ENCODE measurements at regions of chr6 and their contacts with region 1.

Region 1: GRCh38 chr6:149925974-149926777 is 3.3 kb upstream of the RAET1G start:
- DNase-seq: peak; percentile 87 to 93 (median 90)
- ATAC-seq: peak; percentile 84 to 93 (median 92)
- H3K4me3 ChIP-seq: peak overlapping the region; percentile 42 to 63 (median 56)
- H3K27ac ChIP-seq: peak overlapping the region in 10 of 12 donors; percentile 30 to 70 (median 58)
- H3K4me1 ChIP-seq: peaks cover 0 to 32% (median 20%) of the 10 kb centered on the region in 12 donors
- H3K27me3 ChIP-seq: peaks cover 0 to 58% (median 24%) of the 10 kb centered on the region in 9 donors
- CTCF ChIP-seq: peak; percentile 72 to 95 (median 86)
- POLR2A ChIP-seq: no peak

Region 2: DNA sequence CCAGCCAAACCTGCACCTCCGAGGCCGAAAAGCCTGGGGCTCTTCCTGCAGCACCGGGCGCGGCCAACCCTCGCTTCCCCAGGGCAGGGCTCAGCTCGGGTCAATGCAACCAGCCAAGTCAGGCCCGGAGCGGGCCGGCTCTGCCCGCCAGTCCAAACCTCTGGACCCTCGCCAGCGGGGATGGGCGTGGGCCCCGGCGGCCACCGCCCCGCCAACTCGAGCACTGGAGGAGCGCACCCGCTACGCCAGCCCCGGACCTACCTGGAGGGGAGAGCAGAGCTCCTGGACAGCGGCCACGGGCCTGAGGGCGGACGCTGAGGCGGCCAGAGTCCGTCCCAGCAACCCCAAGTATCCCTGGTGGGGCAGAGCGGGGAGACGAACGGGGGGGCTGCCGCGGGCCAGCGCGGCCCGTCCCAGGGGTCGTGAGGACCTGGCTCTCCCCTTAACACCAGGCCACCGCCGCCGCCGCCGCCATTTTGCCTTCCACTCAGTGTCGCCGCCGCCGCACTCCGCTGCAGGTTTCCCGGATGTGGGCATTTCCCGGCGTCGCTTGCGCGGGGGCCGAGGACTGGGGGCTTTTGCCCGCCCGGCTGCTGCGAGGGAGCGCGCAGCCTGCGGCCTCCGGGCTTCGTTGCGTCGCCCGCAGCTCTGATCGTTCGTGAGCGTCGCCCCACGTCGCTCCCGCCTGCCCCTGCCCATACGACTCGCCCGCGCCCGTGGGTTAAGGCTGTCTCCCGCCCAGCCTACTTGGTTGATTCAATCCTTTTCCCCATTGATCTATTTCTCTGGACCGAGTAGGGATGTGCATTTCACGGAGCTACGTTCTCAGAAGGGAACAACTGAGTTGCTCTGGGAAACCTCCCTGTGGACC is 208.4 kb before region 1 on chr6 and contains the start of gene LATS1:
- intact Hi-C with region 1: loop called in 6 of 10 experiments (anchors 2 to 10 kb)
- DNase-seq: peak; percentile 91 to 95 (median 95)
- ATAC-seq: peak; percentile 92 to 96 (median 94)
- H3K4me3 ChIP-seq: peak within 1 kb of the TSS; percentile 59 to 98 (median 81)
- H3K27ac ChIP-seq: peak within 1 kb of the TSS; percentile 94 to 100 (median 98)
- H3K4me1 ChIP-seq: peaks cover 3 to 39% (median 26%) of the 10 kb centered on the region in 12 donors
- H3K27me3 ChIP-seq: no peaks in the 10 kb centered on the region
- CTCF ChIP-seq: no peak
- POLR2A ChIP-seq: peak in 1 of 2 donors; percentile 73
- total RNA-seq, gene LATS1: 9.4 to 18.5 (median 10.9) TPM

Region 3: GRCh38 chr6:149729824-149730223 is 196.4 kb before region 1 on chr6:
- intact Hi-C with region 1: loop called in 5 of 10 experiments (anchors 5 to 10 kb)
- DNase-seq: no peak
- ATAC-seq: no peak
- H3K4me3 ChIP-seq: no peak overlapping the region
- H3K27ac ChIP-seq: peak overlapping the region in 1 of 12 donors; percentile 90
- H3K4me1 ChIP-seq: peaks cover 0 to 32% (median 0%) of the 10 kb centered on the region in 12 donors
- H3K27me3 ChIP-seq: no peaks in the 10 kb centered on the region
- CTCF ChIP-seq: no peak
- POLR2A ChIP-seq: no peak

Region 4: DNA sequence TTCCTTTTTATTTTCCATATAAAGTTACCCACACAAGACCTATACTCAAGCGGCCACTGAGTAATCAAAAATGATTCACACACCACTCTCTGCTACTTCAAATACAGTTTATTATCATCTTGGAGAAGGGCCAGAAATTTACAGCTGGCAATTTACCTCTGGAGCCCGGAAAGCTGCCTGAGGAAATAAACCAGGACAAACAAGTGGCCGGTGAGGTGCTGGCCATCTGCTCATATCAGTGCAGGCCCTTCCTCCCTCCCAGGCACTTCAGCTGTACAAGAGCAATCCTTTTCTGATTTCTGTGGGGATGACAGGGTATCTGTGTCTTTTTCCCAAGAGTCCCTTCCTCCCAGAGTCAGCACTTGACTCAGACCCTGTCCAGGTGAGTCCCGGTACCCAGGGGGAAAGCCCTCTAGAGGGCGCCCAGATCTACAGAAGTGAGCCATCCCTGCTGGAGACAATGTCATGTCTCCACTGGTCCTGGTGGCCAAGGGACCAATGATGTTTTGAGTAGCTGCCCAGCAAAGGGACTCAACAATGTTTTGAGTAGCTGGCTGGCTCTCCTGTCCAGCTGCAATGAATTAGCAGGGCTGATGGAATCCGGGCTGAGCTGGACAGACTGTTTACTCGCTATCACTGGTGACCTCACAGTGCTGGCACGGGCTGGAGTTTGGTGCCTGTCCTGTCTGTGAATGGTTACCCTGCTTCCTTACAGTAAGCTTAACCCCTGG is 85.7 kb before region 1 on chr6:
- intact Hi-C with region 1: loop called in 7 of 10 experiments (anchors 2 kb)
- DNase-seq: peak; percentile 81 to 93 (median 86)
- ATAC-seq: peak; percentile 98
- H3K4me3 ChIP-seq: no peak overlapping the region
- H3K27ac ChIP-seq: peak overlapping the region in 6 of 12 donors; percentile 13 to 57 (median 32)
- H3K4me1 ChIP-seq: peaks cover 0 to 15% (median 7%) of the 10 kb centered on the region in 12 donors
- H3K27me3 ChIP-seq: no peaks in the 10 kb centered on the region
- CTCF ChIP-seq: peak; percentile 38 to 72 (median 58)
- POLR2A ChIP-seq: no peak

Region 5: DNA sequence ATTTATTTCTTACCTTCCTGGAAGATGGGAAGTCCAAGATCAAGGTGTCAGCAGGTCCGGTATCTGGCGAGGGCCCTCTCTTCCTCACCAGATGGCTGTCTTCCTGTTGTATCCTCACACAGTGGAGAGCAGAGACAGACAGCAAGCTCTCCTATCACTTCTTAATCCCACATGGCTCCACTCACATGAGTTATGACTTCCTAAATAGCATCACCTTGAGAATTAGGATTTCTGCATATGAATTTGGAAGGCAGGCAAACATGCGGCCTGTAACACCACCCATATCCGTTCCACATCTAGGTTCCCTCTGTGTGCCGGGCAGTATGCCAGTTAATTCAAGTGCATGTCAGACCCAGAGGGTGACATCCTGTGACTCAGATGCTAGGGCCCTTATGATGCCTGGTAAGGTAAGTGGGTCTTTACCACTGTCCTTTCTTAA is 30.3 kb before region 1 on chr6:
- intact Hi-C with region 1: loop called in 2 of 10 experiments (anchors 2 kb)
- DNase-seq: peak in 4 of 5 donors; percentile 51 to 76 (median 73)
- ATAC-seq: peak; percentile 68 to 88 (median 76)
- H3K4me3 ChIP-seq: no peak overlapping the region
- H3K27ac ChIP-seq: peak overlapping the region; percentile 31 to 77 (median 66)
- H3K4me1 ChIP-seq: peaks cover 8 to 36% (median 27%) of the 10 kb centered on the region in 12 donors
- H3K27me3 ChIP-seq: no peaks in the 10 kb centered on the region
- CTCF ChIP-seq: no peak
- POLR2A ChIP-seq: no peak

Measured in heart left ventricle (tissue), 16 donors.